MCF 10A (cell line): ENCODE measurements at regions of chr12 and their contacts with region 1.

Region 1: DNA sequence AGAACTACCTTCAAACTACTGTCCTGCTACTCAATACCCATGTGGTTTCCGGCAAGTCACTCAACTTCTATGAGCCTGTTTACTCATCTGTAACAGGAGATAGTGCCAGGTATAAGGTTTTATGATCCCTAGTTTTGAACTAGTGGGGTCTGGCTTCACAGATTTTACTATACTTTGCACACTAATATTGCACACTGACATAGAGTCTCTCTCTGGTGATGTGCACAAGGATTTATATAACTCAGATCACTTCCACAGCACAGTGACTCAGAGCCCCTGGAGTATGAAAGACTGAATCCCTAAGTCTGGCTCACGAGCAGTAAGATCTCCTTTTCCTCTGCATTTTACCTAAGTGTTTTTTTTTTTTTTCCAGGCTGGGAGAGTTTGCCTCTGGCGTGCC is 69.7 kb upstream of the SLC38A2 start:
- DNase-seq: peak; percentile 54
- H3K4me3 Mint-ChIP-seq: peak overlapping the region; percentile 28
- H3K27ac Mint-ChIP-seq: peak overlapping the region; percentile 97
- H3K4me1 Mint-ChIP-seq: peaks cover 61% of the 10 kb centered on the region
- H3K27me3 Mint-ChIP-seq: no peaks in the 10 kb centered on the region
- CTCF ChIP-seq: no peak

Region 2: DNA sequence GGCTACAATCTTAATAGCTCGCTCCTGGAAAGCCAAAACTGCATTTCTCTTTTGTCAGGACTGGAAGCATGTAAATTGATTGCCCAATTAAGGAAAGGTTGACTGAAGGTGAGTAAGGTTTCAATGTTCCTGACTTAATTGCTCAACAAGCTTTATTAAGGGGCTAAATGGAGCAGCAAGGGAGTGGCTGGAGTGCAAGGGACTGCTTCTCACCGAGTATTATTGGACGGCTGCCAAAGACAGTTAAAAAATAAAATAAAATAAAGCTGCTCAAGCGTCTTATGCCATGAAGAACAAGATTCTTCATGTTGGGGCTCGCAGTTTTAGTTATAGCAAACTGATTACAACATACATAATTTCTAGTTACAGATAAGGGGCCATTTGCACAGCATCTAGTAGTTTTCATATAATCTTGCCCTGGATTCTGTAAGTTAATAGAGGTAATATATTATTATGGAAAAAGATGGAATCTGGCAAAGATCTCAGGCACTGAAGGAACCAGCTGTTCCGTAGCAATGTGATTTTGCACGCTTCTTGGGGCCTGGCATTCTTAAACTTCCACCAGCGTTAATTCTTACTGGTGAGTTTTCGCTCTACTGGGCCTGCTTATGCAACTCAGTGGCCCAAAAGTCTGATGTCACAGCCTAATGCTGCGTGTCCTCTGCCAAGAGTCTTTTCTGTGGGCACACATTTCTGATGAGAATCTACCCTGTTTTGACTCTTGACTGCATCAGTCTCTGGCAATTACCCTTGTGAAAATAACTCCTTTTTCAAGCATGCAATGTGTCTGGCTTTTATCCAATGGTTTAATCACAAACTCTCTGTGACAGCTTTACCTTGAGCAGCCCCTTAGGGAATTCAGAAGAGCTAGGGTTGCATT is 281.9 kb before region 1 on chr12:
- CTCF ChIA-PET with region 1: no interaction called
- POLR2A ChIA-PET with region 1: no interaction called
- intact Hi-C with region 1: no loop called
- DNase-seq: peak; percentile 93
- H3K4me3 Mint-ChIP-seq: peak overlapping the region; percentile 51
- H3K27ac Mint-ChIP-seq: peak overlapping the region; percentile 77
- H3K4me1 Mint-ChIP-seq: peaks cover 18% of the 10 kb centered on the region
- H3K27me3 Mint-ChIP-seq: no peaks in the 10 kb centered on the region
- CTCF ChIP-seq: no peak

Region 3: GRCh38 chr12:46391630-46392029 is 50.6 kb before region 1 on chr12:
- CTCF ChIA-PET with region 1: interaction called, 11 read pairs
- POLR2A ChIA-PET with region 1: interaction called, 85 read pairs
- intact Hi-C with region 1: no loop called
- DNase-seq: no peak
- H3K4me3 Mint-ChIP-seq: no peak overlapping the region
- H3K27ac Mint-ChIP-seq: no peak overlapping the region
- H3K4me1 Mint-ChIP-seq: peaks cover 45% of the 10 kb centered on the region
- H3K27me3 Mint-ChIP-seq: no peaks in the 10 kb centered on the region
- CTCF ChIP-seq: no peak